ENCODE measurements at regions of chr17 and their contacts with region 1.

Region 1: GRCh38 chr17:54408741-54409140 is 491.9 kb upstream of the TOM1L1 start:
- DNase-seq: no peak
- H3K4me3 ChIP-seq: no peak overlapping the region
- H3K27ac ChIP-seq: no peak overlapping the region
- H3K4me1 ChIP-seq: no peaks in the 10 kb centered on the region
- H3K27me3 ChIP-seq: no peaks in the 10 kb centered on the region
- CTCF ChIP-seq: no peak
- EP300 ChIP-seq: no peak
- POLR2A ChIP-seq: no peak

Region 2: GRCh38 chr17:54482843-54483242 is 74.1 kb after region 1 on chr17:
- in situ Hi-C with region 1: loop called in 1 of 4 experiments (anchors 10 kb)
- intact Hi-C with region 1: no loop called
- DNase-seq: no peak
- H3K4me3 ChIP-seq: no peak overlapping the region
- H3K27ac ChIP-seq: no peak overlapping the region
- H3K4me1 ChIP-seq: no peaks in the 10 kb centered on the region
- H3K27me3 ChIP-seq: no peaks in the 10 kb centered on the region
- CTCF ChIP-seq: no peak
- EP300 ChIP-seq: no peak
- POLR2A ChIP-seq: no peak

Region 3: GRCh38 chr17:55303701-55304145 is 895.0 kb after region 1 on chr17:
- in situ Hi-C with region 1: no loop called
- intact Hi-C with region 1: no loop called
- DNase-seq: no peak
- H3K4me3 ChIP-seq: no peak overlapping the region
- H3K27ac ChIP-seq: no peak overlapping the region
- H3K4me1 ChIP-seq: peaks cover 0 to 11% (median 2%) of the 10 kb centered on the region in 4 donors
- H3K27me3 ChIP-seq: no peaks in the 10 kb centered on the region
- CTCF ChIP-seq: no peak
- EP300 ChIP-seq: no peak
- POLR2A ChIP-seq: no peak

Measured in transverse colon (tissue), 4 donors.